ENCODE measurements at regions of chr3 and their contacts with region 1.

Region 1: GRCh38 chr3:36993326-36994283 is at the start of gene MLH1:
- DNase-seq: peak; percentile 88 to 100
- ATAC-seq: peak; percentile 90 to 94
- H3K4me3 ChIP-seq: peak within 1 kb of the TSS; percentile 70 to 86 (median 80)
- H3K27ac ChIP-seq: peak within 1 kb of the TSS; percentile 92 to 97 (median 96)
- H3K4me1 ChIP-seq: peaks cover 62 to 67% of the 10 kb centered on the region in 2 donors
- H3K27me3 ChIP-seq: no peaks in the 10 kb centered on the region
- CTCF ChIP-seq: no peak
- POLR2A ChIP-seq: peak; percentile 62 to 77
- total RNA-seq, gene MLH1: 25.2 to 52.5 (median 36.4) TPM

Region 2: GRCh38 chr3:37054370-37054769 is 60.8 kb after region 1 on chr3:
- in situ Hi-C with region 1: no loop called
- intact Hi-C with region 1: loop called (anchors 2 kb)
- DNase-seq: no peak
- ATAC-seq: peak; percentile 93 to 96
- H3K4me3 ChIP-seq: peak overlapping the region in 1 of 4 donors; percentile 1
- H3K27ac ChIP-seq: peak overlapping the region; percentile 86 to 90 (median 89)
- H3K4me1 ChIP-seq: peaks cover 35 to 49% of the 10 kb centered on the region in 2 donors
- H3K27me3 ChIP-seq: no peaks in the 10 kb centered on the region
- CTCF ChIP-seq: no peak
- POLR2A ChIP-seq: no peak

Region 3: DNA sequence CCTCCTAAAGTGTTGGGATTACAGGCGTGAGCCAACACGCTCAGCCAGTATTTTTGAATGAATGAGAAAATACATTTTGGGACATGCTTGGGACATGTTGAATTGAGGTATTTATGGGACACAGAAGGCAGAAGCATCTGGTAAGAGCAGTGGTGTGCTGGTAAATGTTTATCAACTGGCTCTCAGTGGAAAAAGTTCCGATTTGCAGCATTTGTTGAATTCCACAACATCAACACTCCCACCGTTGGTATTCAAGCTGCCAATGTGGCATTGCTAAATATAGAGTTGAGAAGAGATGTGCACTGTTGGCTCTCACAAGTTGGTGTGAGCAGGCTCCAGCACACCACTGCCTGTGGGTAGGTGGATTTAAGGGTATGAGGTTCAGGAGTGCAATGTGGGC is 216.6 kb after region 1 on chr3:
- in situ Hi-C with region 1: no loop called
- intact Hi-C with region 1: loop called (anchors 2 kb)
- DNase-seq: no peak
- ATAC-seq: no peak
- H3K4me3 ChIP-seq: no peak overlapping the region
- H3K27ac ChIP-seq: no peak overlapping the region
- H3K4me1 ChIP-seq: peaks cover 0 to 3% of the 10 kb centered on the region in 2 donors
- H3K27me3 ChIP-seq: no peaks in the 10 kb centered on the region
- CTCF ChIP-seq: no peak
- POLR2A ChIP-seq: no peak

Region 4: GRCh38 chr3:38164966-38165680 is 1171.5 kb after region 1 on chr3 and contains the start of gene OXSR1:
- in situ Hi-C with region 1: no loop called
- intact Hi-C with region 1: loop called (anchors 10 kb)
- DNase-seq: peak; percentile 98 to 99
- ATAC-seq: peak; percentile 95 to 97
- H3K4me3 ChIP-seq: peak within 1 kb of the TSS; percentile 84 to 93 (median 88)
- H3K27ac ChIP-seq: peak within 1 kb of the TSS; percentile 94 to 99 (median 96)
- H3K4me1 ChIP-seq: peaks cover 28 to 30% of the 10 kb centered on the region in 2 donors
- H3K27me3 ChIP-seq: no peaks in the 10 kb centered on the region
- CTCF ChIP-seq: peak in 1 of 5 experiments; percentile 9
- POLR2A ChIP-seq: peak; percentile 88 to 91
- total RNA-seq, gene OXSR1: 37.9 to 50.0 (median 43.2) TPM